ENCODE measurements at regions of chr2 and their contacts with region 1.

Region 1: GRCh38 chr2:226835796-226836547 is at the start of gene RHBDD1:
- DNase-seq: peak; percentile 97
- H3K4me3 ChIP-seq: peak within 1 kb of the TSS; percentile 75 to 92 (median 84)
- H3K27ac ChIP-seq: peak within 1 kb of the TSS; percentile 98 to 99 (median 99)
- H3K4me1 ChIP-seq: peaks cover 0 to 33% (median 26%) of the 10 kb centered on the region in 4 donors
- H3K27me3 ChIP-seq: no peaks in the 10 kb centered on the region
- CTCF ChIP-seq: no peak
- EP300 ChIP-seq: peak in 2 of 4 donors; percentile 20 to 63
- POLR2A ChIP-seq: peak; percentile 88 to 91
- total RNA-seq, gene RHBDD1: 17.5 to 28.0 (median 23.1) TPM

Region 2: DNA sequence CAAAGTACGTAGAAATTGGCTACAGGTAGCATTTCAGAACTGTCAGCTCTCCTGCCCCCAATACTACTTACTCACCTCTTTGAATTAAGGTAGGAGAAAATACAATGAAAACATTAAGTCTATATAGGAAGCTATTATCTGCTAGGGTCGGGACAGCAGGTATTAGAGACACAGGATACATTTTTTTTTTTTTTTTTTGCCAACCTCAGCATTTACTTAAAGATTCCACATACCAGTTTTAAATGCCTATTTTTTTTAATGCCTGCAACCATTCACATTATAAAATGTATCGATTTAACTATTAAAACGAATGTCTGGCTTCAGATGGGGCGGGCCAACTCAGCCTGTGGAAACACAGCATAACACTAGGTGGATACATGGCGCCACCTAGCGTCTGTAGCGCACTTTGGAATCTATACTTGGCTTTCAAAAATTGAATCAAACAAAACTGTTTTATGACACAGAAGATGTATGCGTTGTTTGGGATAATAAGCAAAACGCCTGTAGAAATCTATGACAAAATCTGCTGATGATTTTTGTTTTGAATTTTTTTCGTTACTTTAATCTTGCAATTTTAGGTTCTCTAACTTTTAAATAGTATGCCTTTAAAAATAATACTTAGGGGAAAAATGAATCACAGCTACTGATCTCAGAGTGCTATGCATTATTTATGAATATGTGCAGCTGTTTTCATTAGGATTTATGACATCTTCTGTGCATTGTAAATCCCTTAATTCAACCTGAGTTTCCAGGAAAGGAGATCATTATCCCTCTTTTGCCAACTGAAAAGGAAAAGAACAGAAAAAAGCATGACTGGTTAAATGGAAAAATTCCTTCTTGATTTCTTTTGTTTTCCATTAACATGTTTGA is 1175.5 kb before region 1 on chr2:
- intact Hi-C with region 1: loop called (anchors 10 kb)
- DNase-seq: peak; percentile 76
- H3K4me3 ChIP-seq: no peak overlapping the region
- H3K27ac ChIP-seq: no peak overlapping the region
- H3K4me1 ChIP-seq: no peaks in the 10 kb centered on the region
- H3K27me3 ChIP-seq: no peaks in the 10 kb centered on the region
- CTCF ChIP-seq: peak; percentile 21 to 81 (median 56)
- EP300 ChIP-seq: no peak
- POLR2A ChIP-seq: no peak

Region 3: DNA sequence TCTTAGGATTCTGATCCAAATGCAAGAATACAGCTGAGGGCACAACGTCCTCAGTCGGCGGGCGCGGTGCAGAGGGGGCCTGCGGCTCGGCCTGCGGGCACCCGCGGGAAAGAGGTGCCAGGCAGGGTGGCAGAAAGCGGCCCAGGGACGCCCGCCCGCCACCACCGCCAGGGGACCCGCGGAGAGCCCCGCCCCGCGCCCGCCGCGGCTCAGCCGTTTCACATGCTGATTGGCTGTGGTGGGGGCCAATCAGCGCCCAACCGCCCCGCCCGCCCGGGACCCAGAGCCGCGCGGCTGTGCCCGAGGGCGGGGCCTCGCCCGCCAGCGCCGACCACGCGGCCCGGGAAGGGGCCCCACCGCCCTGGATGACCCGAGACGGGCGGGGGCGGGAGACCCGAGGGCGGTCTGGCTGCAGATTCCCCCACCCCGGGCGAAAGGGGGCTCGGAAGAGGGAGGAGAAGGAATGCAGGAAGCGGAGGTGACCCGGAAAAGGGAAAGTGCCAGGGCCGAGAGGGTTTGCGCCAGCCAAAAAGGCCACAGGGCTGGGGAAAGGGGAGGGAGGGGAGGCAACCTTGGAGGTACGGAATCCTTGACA is 44.4 kb before region 1 on chr2:
- intact Hi-C with region 1: no loop called
- DNase-seq: peak; percentile 95
- H3K4me3 ChIP-seq: peak overlapping the region; percentile 61 to 85 (median 72)
- H3K27ac ChIP-seq: peak overlapping the region; percentile 89 to 97 (median 96)
- H3K4me1 ChIP-seq: peaks cover 0 to 84% (median 62%) of the 10 kb centered on the region in 4 donors
- H3K27me3 ChIP-seq: no peaks in the 10 kb centered on the region
- CTCF ChIP-seq: peak; percentile 11 to 66 (median 59)
- EP300 ChIP-seq: no peak
- POLR2A ChIP-seq: no peak

Region 4: GRCh38 chr2:226891780-226892590 is 56.0 kb after region 1 on chr2:
- intact Hi-C with region 1: no loop called
- DNase-seq: no peak
- H3K4me3 ChIP-seq: no peak overlapping the region
- H3K27ac ChIP-seq: no peak overlapping the region
- H3K4me1 ChIP-seq: no peaks in the 10 kb centered on the region
- H3K27me3 ChIP-seq: no peaks in the 10 kb centered on the region
- CTCF ChIP-seq: no peak
- EP300 ChIP-seq: no peak
- POLR2A ChIP-seq: no peak

Region 5: GRCh38 chr2:226984750-226985582 is 149.0 kb after region 1 on chr2:
- intact Hi-C with region 1: loop called (anchors 10 kb)
- DNase-seq: no peak
- H3K4me3 ChIP-seq: no peak overlapping the region
- H3K27ac ChIP-seq: peak overlapping the region in 1 of 4 donors; percentile 52
- H3K4me1 ChIP-seq: peaks cover 0 to 11% (median 4%) of the 10 kb centered on the region in 4 donors
- H3K27me3 ChIP-seq: no peaks in the 10 kb centered on the region
- CTCF ChIP-seq: peak; percentile 46 to 78 (median 65)
- EP300 ChIP-seq: no peak
- POLR2A ChIP-seq: no peak

Region 6: DNA sequence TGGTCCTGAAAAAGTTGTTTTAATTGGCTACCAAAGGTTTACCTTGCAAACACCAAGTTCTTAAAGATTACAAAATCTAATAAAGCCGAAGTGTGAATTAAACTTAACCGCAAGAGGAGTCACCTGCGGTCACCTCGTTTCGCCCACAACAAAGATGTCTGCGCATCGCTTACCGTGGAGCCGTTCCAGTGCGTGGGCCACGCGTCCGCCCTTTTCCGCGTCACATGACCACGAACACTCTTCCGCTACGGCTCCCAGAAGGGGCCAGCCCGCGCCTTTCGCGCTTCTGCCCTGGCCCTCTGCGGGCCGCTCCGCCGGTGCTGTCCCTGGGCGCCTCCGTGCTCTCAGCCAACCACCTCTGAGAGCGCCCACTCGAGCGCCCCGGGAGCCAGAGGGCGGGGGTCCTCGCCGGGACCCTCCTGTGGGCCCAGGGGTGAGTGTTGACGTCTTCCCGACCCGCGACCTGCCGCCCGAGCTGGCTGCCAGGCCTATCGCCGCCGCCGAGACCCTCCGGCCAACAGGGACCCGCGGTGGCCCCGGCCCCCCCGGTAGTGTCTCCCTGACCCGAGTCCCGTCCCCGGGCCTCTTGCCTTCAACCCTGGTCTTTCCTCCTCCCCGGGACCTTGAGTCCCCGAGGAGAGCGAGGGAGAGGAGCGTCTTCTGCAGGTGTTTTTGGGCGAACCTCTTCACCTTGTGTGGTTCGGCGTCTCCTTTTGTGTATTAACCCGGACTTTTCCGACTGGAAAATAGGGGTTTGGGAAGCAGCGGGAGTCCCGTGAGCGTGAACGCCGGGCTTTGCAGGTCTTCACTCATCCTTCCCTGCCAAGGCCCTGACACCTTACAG is 489.2 kb after region 1 on chr2 and contains the start of gene MFF:
- intact Hi-C with region 1: loop called (anchors 10 kb)
- DNase-seq: peak; percentile 96
- H3K4me3 ChIP-seq: peak within 1 kb of the TSS; percentile 81 to 95 (median 90)
- H3K27ac ChIP-seq: peak within 1 kb of the TSS; percentile 91 to 93 (median 92)
- H3K4me1 ChIP-seq: peaks cover 0 to 21% (median 12%) of the 10 kb centered on the region in 4 donors
- H3K27me3 ChIP-seq: no peaks in the 10 kb centered on the region
- CTCF ChIP-seq: no peak
- EP300 ChIP-seq: peak in 2 of 4 donors; percentile 26 to 31
- POLR2A ChIP-seq: peak; percentile 47 to 66
- total RNA-seq, gene MFF: 109 to 138 (median 118) TPM